ENCODE measurements at regions of chr9 and their contacts with region 1.

Region 1: GRCh38 chr9:3181049-3181953 is 337.4 kb upstream of the PUM3 start:
- DNase-seq: peak in 11 of 14 experiments; percentile 1 to 50 (median 13)
- ATAC-seq: peak; percentile 34
- H3K4me3 ChIP-seq: peak overlapping the region; percentile 22
- H3K4me3 Mint-ChIP-seq: no peak overlapping the region
- H3K27ac ChIP-seq: no peak overlapping the region
- H3K27ac Mint-ChIP-seq: no peak overlapping the region
- H3K4me1 ChIP-seq: peaks cover 7% of the 10 kb centered on the region
- H3K4me1 Mint-ChIP-seq: no peaks in the 10 kb centered on the region
- H3K27me3 ChIP-seq: peaks cover 21 to 23% of the 10 kb centered on the region in 2 experiments
- H3K27me3 Mint-ChIP-seq: peaks cover 48% of the 10 kb centered on the region
- CTCF ChIP-seq: no peak

Region 2: DNA sequence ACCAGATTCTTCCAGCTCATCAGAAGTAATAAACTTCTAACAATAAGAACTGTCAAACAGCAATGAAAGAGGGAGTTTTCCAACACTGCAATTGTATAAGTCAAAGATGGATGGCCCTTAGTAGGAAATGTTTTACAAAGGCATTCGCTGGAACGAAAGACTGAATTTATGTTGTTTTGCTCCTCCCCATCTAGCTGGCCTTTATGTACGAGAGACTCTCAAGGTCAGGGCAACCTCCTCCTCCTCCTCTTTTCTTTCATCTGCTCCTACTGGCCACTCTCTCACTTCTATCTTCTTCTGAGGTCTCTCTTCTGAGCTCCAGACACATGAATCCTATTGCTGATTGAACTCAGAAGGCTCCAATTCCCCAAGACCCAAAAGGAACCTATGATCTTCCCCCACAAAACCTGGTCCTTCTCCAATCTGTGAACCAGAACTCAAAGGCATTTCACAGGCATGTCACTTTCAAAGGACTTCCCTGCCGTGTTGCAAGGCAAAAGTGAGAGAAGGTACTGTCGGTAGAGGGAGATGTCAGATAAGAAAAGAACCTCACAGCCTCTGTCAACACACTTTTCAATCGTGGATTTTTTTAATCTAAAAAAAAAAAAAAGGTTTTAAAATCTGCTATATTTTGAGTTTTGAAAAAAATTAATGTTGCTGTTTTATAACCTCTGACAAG is 308.9 kb before region 1 on chr9:
- CTCF ChIA-PET with region 1: no interaction called
- POLR2A ChIA-PET with region 1: no interaction called
- intact Hi-C with region 1: loop called in 1 of 2 experiments (anchors 5 kb)
- DNase-seq: peak in 4 of 14 experiments; percentile 16 to 61 (median 52)
- ATAC-seq: peak; percentile 73
- H3K4me3 ChIP-seq: no peak overlapping the region
- H3K4me3 Mint-ChIP-seq: no peak overlapping the region
- H3K27ac ChIP-seq: peak overlapping the region in 1 of 2 donors; percentile 30
- H3K27ac Mint-ChIP-seq: peak overlapping the region; percentile 1
- H3K4me1 ChIP-seq: peaks cover 3% of the 10 kb centered on the region
- H3K4me1 Mint-ChIP-seq: peaks cover 15% of the 10 kb centered on the region
- H3K27me3 ChIP-seq: peaks cover 0 to 6% of the 10 kb centered on the region in 2 experiments
- H3K27me3 Mint-ChIP-seq: peaks cover 12% of the 10 kb centered on the region
- CTCF ChIP-seq: peak; percentile 19

Region 3: DNA sequence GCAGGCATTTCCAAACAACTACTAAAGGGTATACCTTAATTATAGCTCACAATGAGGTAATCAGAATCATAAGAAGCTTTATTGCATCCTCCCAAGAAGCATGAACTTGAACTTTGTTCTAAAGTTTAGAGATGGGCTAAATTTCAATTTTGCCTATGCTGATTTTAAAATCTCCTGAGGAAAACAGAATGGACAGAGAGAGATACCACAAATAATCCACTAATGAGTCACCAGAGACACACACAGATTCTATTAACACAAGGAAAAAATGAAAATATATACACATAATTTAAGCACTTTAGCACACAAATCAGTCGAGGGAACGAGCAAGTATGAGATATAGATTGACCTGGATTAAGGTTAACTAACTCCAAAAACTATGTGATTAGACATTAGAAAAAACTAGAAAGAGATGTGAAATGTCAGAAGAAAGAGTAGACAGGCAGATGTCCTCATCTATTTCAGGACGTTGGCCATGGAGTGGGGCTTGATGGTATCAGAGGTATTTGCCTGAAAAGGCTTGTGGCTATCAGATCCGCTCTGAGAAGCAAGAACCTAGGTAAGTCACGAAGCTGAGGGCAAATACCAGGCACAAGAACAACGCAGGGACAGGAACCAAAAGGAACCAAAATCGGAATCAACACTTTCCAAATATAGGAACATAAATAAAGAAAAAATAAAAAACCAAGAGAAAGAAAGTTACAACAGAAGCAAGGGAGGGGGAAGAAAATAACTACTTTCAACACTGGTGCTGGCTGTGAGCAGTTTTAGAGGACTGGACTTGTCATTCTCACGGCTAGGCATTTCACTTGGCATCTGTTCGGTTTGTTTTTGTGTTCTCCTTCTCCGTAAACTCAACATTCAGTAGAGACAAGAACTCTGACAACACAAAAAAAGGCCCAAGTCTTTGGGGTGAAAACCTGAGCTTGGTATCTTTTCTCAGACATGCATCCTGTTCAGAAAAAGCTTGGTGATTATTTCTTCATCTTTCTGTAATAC is 42.8 kb before region 1 on chr9:
- CTCF ChIA-PET with region 1: no interaction called
- POLR2A ChIA-PET with region 1: no interaction called
- intact Hi-C with region 1: no loop called
- DNase-seq: no peak
- ATAC-seq: no peak
- H3K4me3 ChIP-seq: no peak overlapping the region
- H3K4me3 Mint-ChIP-seq: no peak overlapping the region
- H3K27ac ChIP-seq: no peak overlapping the region
- H3K27ac Mint-ChIP-seq: no peak overlapping the region
- H3K4me1 ChIP-seq: no peaks in the 10 kb centered on the region
- H3K4me1 Mint-ChIP-seq: no peaks in the 10 kb centered on the region
- H3K27me3 ChIP-seq: no peaks in the 10 kb centered on the region
- H3K27me3 Mint-ChIP-seq: peaks cover 17% of the 10 kb centered on the region
- CTCF ChIP-seq: no peak